ENCODE measurements at regions of chr17 and their contacts with region 1.

Region 1: GRCh38 chr17:81601525-81602120 is 35.3 kb downstream of the NPLOC4 start:
- DNase-seq: peak; percentile 29 to 90
- H3K4me3 ChIP-seq: no peak overlapping the region
- H3K27ac ChIP-seq: no peak overlapping the region
- H3K4me1 ChIP-seq: peaks cover 0 to 22% (median 11%) of the 10 kb centered on the region in 4 donors
- H3K27me3 ChIP-seq: no peaks in the 10 kb centered on the region
- CTCF ChIP-seq: peak in 4 of 7 experiments; percentile 58 to 80 (median 66)
- EP300 ChIP-seq: no peak
- POLR2A ChIP-seq: no peak

Region 2: GRCh38 chr17:81255019-81255717 is 346.5 kb before region 1 on chr17:
- intact Hi-C with region 1: loop called (anchors 5 kb)
- DNase-seq: peak; percentile 93 to 96
- H3K4me3 ChIP-seq: no peak overlapping the region
- H3K27ac ChIP-seq: peak overlapping the region in 4 of 5 donors; percentile 35 to 72 (median 60)
- H3K4me1 ChIP-seq: peaks cover 11 to 30% (median 20%) of the 10 kb centered on the region in 4 donors
- H3K27me3 ChIP-seq: no peaks in the 10 kb centered on the region
- CTCF ChIP-seq: peak in 4 of 7 experiments; percentile 35 to 83 (median 52)
- EP300 ChIP-seq: no peak
- POLR2A ChIP-seq: no peak

Region 3: DNA sequence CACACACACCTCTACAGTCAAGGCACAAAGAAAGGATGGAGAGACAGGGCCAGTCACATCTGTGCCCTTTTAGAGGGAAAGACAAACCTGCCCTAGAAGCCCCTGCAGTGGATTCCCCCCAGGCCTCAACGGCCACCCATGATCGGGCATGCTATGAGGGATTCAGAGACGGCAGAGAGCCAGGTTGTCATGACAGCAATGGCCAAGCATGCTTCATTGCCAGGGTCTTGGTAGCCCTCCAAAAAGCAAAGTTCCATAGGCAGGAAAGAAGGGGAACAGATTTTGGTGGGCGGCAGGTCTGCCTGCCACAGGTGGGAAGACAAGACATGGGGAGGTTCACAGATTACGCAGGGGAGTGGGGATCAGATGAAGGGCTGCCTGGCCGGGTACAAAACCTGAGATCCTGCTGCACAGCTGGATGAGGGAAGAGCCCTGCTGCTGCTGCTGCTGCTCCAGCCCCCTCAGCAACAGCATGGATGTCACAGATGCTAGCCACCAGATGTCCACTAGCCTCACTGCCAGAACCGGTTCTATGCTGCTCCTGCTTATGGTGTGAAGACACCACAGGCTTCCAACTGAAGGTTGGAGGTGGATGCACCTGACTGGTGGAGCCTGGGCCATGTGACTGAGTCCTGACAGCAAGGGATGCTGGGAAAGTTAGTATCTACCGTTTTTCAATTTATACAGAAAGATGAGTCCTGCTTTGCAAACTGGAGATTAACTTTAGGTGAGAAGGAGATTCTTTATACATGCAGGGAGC is 106.8 kb before region 1 on chr17:
- intact Hi-C with region 1: no loop called
- DNase-seq: peak in 1 of 2 donors; percentile 66
- H3K4me3 ChIP-seq: no peak overlapping the region
- H3K27ac ChIP-seq: no peak overlapping the region
- H3K4me1 ChIP-seq: peaks cover 0 to 16% (median 5%) of the 10 kb centered on the region in 4 donors
- H3K27me3 ChIP-seq: peaks cover 0 to 28% (median 0%) of the 10 kb centered on the region in 3 donors
- CTCF ChIP-seq: no peak
- EP300 ChIP-seq: no peak
- POLR2A ChIP-seq: no peak

Region 4: GRCh38 chr17:81651692-81652091 is 50.1 kb after region 1 on chr17:
- intact Hi-C with region 1: no loop called
- DNase-seq: no peak
- H3K4me3 ChIP-seq: no peak overlapping the region
- H3K27ac ChIP-seq: no peak overlapping the region
- H3K4me1 ChIP-seq: peaks cover 0 to 14% (median 6%) of the 10 kb centered on the region in 4 donors
- H3K27me3 ChIP-seq: peaks cover 27 to 94% (median 41%) of the 10 kb centered on the region in 3 donors
- CTCF ChIP-seq: no peak
- EP300 ChIP-seq: no peak
- POLR2A ChIP-seq: no peak

Region 5: GRCh38 chr17:81666342-81667191 is 64.9 kb after region 1 on chr17 and contains the starts of genes CCDC137 and OXLD1:
- intact Hi-C with region 1: no loop called
- DNase-seq: peak; percentile 98 to 99
- H3K4me3 ChIP-seq: peak within 1 kb of the TSS; percentile 82 to 99 (median 91)
- H3K27ac ChIP-seq: peak within 1 kb of the TSS; percentile 91 to 97 (median 91)
- H3K4me1 ChIP-seq: peaks cover 20 to 49% (median 35%) of the 10 kb centered on the region in 4 donors
- H3K27me3 ChIP-seq: no peaks in the 10 kb centered on the region
- CTCF ChIP-seq: no peak
- EP300 ChIP-seq: no peak
- POLR2A ChIP-seq: peak in 2 of 4 donors; percentile 37 to 82
- total RNA-seq, gene CCDC137: 0.58 to 279 (median 9.4) TPM
- total RNA-seq, gene OXLD1: 9.9 to 112 (median 61.2) TPM in 4 of 5 donors, not detected in the other

Region 6: DNA sequence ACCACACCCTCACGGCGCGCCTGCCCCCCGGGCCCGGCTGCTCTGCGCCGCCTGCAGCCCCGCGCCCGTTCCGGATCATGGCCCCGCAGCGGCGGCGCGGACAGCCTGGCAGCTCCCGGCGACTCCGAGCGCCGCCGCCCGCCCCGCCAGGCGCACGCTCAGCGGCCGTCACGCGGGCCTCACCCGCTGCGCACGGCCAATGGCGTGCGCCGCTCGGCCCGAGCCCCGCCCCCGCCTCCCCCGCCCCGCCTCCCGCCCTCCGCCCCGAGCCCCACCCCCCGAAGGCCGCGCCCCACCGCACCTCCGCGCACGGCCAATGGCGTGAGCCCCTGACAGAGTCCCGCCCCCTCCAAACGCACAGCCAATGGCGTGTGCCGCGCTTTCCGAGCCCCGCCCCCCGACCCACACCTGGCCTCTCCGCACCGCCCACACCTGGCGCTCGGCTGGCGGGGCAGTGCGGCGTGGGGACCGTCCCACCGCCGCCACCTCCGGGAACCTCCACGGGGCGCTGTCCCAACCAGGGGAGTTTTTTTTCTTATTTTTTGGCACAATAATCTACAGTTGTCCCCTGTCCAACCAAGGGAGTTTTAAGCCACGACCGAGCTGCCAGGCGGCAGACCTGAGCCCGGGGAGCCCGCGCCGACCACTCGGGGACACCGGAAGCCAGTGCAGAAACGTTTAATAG is 309.8 kb after region 1 on chr17 and contains the start of gene PCYT2:
- intact Hi-C with region 1: no loop called
- DNase-seq: peak; percentile 96 to 97
- H3K4me3 ChIP-seq: peak within 1 kb of the TSS; percentile 67 to 82 (median 76)
- H3K27ac ChIP-seq: peak within 1 kb of the TSS; percentile 78 to 91 (median 85)
- H3K4me1 ChIP-seq: peaks cover 13 to 57% (median 44%) of the 10 kb centered on the region in 4 donors
- H3K27me3 ChIP-seq: no peaks in the 10 kb centered on the region
- CTCF ChIP-seq: peak in 1 of 7 experiments; percentile 30
- EP300 ChIP-seq: no peak
- POLR2A ChIP-seq: no peak
- total RNA-seq, gene PCYT2: 17.5 to 119 (median 27.2) TPM